Common myeloid progenitor, CD34-positive (primary cell): ENCODE measurements at regions of chr3 and their contacts with region 1.

Region 1: GRCh38 chr3:37986479-37987314 is 3.9 kb upstream of the VILL start:
- DNase-seq: peak in 2 of 3 donors; percentile 42 to 56
- H3K4me3 ChIP-seq: no peak overlapping the region
- H3K27ac ChIP-seq: peak overlapping the region in 1 of 2 experiments; percentile 50
- H3K4me1 ChIP-seq: peaks cover 0 to 9% (median 3%) of the 10 kb centered on the region in 4 experiments
- H3K27me3 ChIP-seq: no peaks in the 10 kb centered on the region

Region 2: GRCh38 chr3:37974121-37975083 is 12.3 kb before region 1 on chr3:
- CTCF ChIA-PET with region 1: interaction called, 28 read pairs
- POLR2A ChIA-PET with region 1: no interaction called
- DNase-seq: peak; percentile 72 to 84 (median 79)
- H3K4me3 ChIP-seq: no peak overlapping the region
- H3K27ac ChIP-seq: no peak overlapping the region
- H3K4me1 ChIP-seq: peaks cover 0 to 3% (median 0%) of the 10 kb centered on the region in 4 experiments
- H3K27me3 ChIP-seq: no peaks in the 10 kb centered on the region

Region 3: GRCh38 chr3:38009807-38010591 is 23.3 kb after region 1 on chr3:
- CTCF ChIA-PET with region 1: no interaction called
- POLR2A ChIA-PET with region 1: no interaction called
- DNase-seq: no peak
- H3K4me3 ChIP-seq: no peak overlapping the region
- H3K27ac ChIP-seq: no peak overlapping the region
- H3K4me1 ChIP-seq: no peaks in the 10 kb centered on the region
- H3K27me3 ChIP-seq: no peaks in the 10 kb centered on the region